ENCODE measurements at regions of chr11 and their contacts with region 1.

Region 1: GRCh38 chr11:120172054-120172911 is 34.4 kb upstream of the TRIM29 start:
- DNase-seq: peak; percentile 67
- H3K4me3 ChIP-seq: no peak overlapping the region
- H3K27ac ChIP-seq: no peak overlapping the region
- H3K4me1 ChIP-seq: no peaks in the 10 kb centered on the region
- H3K27me3 ChIP-seq: no peaks in the 10 kb centered on the region
- CTCF ChIP-seq: peak; percentile 62 to 94 (median 92)
- POLR2A ChIP-seq: no peak

Region 2: GRCh38 chr11:120229451-120230424 is 57.5 kb after region 1 on chr11:
- intact Hi-C with region 1: loop called (anchors 2 kb)
- DNase-seq: no peak
- H3K4me3 ChIP-seq: no peak overlapping the region
- H3K27ac ChIP-seq: no peak overlapping the region
- H3K4me1 ChIP-seq: no peaks in the 10 kb centered on the region
- H3K27me3 ChIP-seq: no peaks in the 10 kb centered on the region
- CTCF ChIP-seq: peak; percentile 10 to 84 (median 74)
- POLR2A ChIP-seq: no peak

Region 3: GRCh38 chr11:120303004-120303637 is 130.8 kb after region 1 on chr11:
- intact Hi-C with region 1: loop called (anchors 5 kb)
- DNase-seq: peak; percentile 60
- H3K4me3 ChIP-seq: no peak overlapping the region
- H3K27ac ChIP-seq: peak overlapping the region; percentile 88 to 89
- H3K4me1 ChIP-seq: peaks cover 15% of the 10 kb centered on the region
- H3K27me3 ChIP-seq: no peaks in the 10 kb centered on the region
- CTCF ChIP-seq: peak; percentile 39 to 77 (median 72)
- POLR2A ChIP-seq: no peak